AG04450 (cell line): ENCODE measurements at regions of chr1 and their contacts with region 1.

Region 1: GRCh38 chr1:109263597-109264398 is 14.5 kb downstream of the CELSR2 start:
- DNase-seq: no peak
- H3K4me3 ChIP-seq: no peak overlapping the region
- H3K27ac ChIP-seq: no peak overlapping the region
- H3K27me3 ChIP-seq: no peaks in the 10 kb centered on the region
- CTCF ChIP-seq: peak; percentile 98

Region 2: GRCh38 chr1:109253484-109254141 is 10.2 kb before region 1 on chr1:
- CTCF ChIA-PET with region 1: interaction called, 17 read pairs
- POLR2A ChIA-PET with region 1: no interaction called
- DNase-seq: no peak
- H3K4me3 ChIP-seq: no peak overlapping the region
- H3K27ac ChIP-seq: peak overlapping the region; percentile 39
- H3K27me3 ChIP-seq: no peaks in the 10 kb centered on the region
- CTCF ChIP-seq: 0 out of 2 replicates have a peak, but pooled peaks have one; percentile 3

Region 3: DNA sequence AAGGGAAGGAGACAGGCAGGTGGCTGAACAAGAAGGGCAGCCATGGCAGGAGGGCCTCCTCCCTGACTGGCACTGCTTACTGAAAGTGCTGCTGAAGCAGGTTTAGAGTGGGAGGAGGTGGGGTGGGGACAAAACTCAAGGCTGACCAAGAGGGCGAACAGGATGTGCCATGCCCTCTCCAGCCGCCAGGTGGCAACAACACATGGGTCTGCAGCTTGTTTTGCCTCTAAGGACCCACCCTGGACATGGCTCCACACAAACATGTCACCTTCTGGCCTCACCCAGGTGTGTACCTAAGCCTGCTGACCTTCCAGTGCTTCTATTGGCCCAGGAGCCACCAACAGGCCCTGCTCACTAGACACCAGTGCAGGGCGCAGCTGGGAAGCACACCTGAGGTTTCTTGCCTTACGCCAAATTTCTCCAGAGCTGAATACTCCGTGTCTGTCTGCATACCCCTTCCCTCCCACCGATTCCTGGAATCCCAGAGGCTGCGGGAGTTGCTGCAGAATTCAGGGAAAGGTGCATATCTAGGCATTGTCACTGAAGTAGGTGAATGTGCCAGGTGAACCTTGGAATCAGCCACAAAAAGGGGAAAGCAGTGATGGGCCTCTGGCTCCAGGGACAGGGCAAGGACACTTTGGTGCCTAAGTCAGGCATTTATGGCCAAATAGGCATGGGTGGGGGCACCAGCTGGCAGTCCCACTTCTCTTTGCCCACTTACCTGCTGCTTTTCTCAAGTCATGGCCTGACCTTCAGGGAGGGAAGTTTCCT is 13.8 kb after region 1 on chr1:
- CTCF ChIA-PET with region 1: interaction called, 21 read pairs
- POLR2A ChIA-PET with region 1: interaction called, 3 read pairs
- DNase-seq: no peak
- H3K4me3 ChIP-seq: no peak overlapping the region
- H3K27ac ChIP-seq: peak overlapping the region; percentile 31
- H3K27me3 ChIP-seq: no peaks in the 10 kb centered on the region
- CTCF ChIP-seq: peak; percentile 89